ENCODE measurements at regions of chr4 and their contacts with region 1.

Region 1: DNA sequence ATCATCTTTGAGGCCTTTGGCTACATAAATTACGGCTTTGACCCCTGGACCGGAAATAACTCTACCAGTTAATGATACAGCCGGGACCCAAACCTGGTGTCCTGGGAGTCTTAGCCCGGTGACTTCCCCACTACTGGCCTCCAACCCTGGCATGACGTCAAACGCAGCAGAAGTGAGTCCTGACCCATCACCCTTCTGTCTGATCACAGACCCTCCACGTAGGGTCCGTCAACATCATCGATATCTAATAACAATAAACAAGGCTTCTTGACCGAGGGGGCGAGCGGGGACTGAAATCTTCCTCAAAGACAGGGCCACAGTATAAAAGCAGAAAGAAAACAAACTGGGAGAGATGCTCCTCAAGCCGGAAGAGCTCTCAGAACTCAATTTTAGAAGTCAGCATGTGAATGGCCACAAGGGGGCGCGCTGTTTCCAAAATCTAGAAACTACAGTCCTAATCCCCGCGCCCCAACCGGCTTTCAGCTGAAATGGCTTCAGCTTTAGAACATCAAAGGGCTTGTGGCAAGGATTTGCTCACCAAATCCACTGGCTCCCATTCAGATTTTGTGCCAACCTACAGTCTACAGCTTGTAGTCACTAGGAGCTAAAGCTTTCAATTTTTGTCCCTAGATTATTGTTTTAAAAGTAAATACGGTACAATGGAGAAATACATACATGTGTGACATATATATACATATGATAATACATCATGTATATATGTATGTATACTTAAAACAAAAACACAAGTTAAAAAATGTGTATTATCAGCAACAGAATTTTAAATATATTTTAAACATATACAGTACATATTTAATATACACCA is 46.4 kb upstream of the ENPP6 start:
- DNase-seq: peak; percentile 85 to 91 (median 90)
- H3K4me3 ChIP-seq: no peak overlapping the region
- H3K4me3 Mint-ChIP-seq: peak overlapping the region; percentile 14 to 61
- H3K27ac ChIP-seq: peak overlapping the region in 1 of 2 donors; percentile 24
- H3K27ac Mint-ChIP-seq: peak overlapping the region in 4 of 7 donors; percentile 15 to 74 (median 31)
- H3K4me1 ChIP-seq: peaks cover 22 to 38% of the 10 kb centered on the region in 2 donors
- H3K4me1 Mint-ChIP-seq: peaks cover 44% of the 10 kb centered on the region
- H3K27me3 ChIP-seq: no peaks in the 10 kb centered on the region
- H3K27me3 Mint-ChIP-seq: peaks cover 0 to 4% (median 0%) of the 10 kb centered on the region in 3 donors
- CTCF ChIP-seq: peak; percentile 80

Region 2: DNA sequence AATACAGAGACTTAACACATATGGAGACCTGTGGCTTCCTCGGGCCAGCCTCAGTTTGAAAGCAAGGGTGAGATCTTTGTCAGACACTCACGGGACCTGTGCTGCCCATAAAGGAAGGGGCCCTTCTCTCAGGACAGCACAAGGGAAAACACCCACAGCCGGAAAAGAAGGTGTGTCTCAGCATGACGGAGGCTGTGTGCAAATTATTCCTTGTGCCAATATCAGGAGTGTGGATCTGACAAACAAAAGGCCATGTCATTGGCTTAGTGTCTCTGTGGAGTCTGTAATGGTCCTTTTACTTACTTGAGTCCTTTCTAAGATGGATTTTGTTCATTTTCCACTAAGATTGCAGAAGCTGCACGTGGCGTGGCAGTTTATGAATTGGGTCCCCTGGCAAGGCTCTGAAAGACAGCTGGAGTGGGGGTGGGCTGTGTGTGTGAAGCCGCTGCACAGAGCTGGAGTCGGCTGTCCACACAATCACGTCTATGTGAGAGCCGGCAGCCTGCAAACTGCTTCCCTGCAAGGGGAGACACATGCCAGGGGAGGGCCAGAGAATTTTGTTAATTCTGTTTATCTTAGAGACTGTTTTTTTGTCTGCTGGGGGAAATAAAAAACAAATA is 48.3 kb before region 1 on chr4:
- intact Hi-C with region 1: no loop called
- DNase-seq: no peak
- H3K4me3 ChIP-seq: no peak overlapping the region
- H3K4me3 Mint-ChIP-seq: no peak overlapping the region
- H3K27ac ChIP-seq: no peak overlapping the region
- H3K27ac Mint-ChIP-seq: no peak overlapping the region
- H3K4me1 ChIP-seq: no peaks in the 10 kb centered on the region
- H3K4me1 Mint-ChIP-seq: no peaks in the 10 kb centered on the region
- H3K27me3 ChIP-seq: no peaks in the 10 kb centered on the region
- H3K27me3 Mint-ChIP-seq: peaks cover 2 to 4% (median 2%) of the 10 kb centered on the region in 3 donors
- CTCF ChIP-seq: no peak

Region 3: GRCh38 chr4:184310171-184310567 is 46.0 kb after region 1 on chr4:
- intact Hi-C with region 1: loop called in 1 of 2 experiments (anchors 5 kb)
- DNase-seq: peak; percentile 53 to 73 (median 59)
- H3K4me3 ChIP-seq: no peak overlapping the region
- H3K4me3 Mint-ChIP-seq: no peak overlapping the region
- H3K27ac ChIP-seq: peak overlapping the region in 1 of 2 donors; percentile 2
- H3K27ac Mint-ChIP-seq: peak overlapping the region in 1 of 7 donors; percentile 67
- H3K4me1 ChIP-seq: peaks cover 34 to 36% of the 10 kb centered on the region in 2 donors
- H3K4me1 Mint-ChIP-seq: peaks cover 42% of the 10 kb centered on the region
- H3K27me3 ChIP-seq: no peaks in the 10 kb centered on the region
- H3K27me3 Mint-ChIP-seq: peaks cover 0 to 4% (median 0%) of the 10 kb centered on the region in 3 donors
- CTCF ChIP-seq: peak; percentile 61

Region 4: GRCh38 chr4:184384056-184384809 is 120.1 kb after region 1 on chr4:
- intact Hi-C with region 1: loop called in 1 of 2 experiments (anchors 10 kb)
- DNase-seq: peak in 2 of 3 donors; percentile 32 to 54
- H3K4me3 ChIP-seq: peak overlapping the region in 1 of 3 experiments; percentile 58
- H3K4me3 Mint-ChIP-seq: peak overlapping the region in 1 of 2 donors; percentile 68
- H3K27ac ChIP-seq: peak overlapping the region; percentile 28 to 82
- H3K27ac Mint-ChIP-seq: peak overlapping the region; percentile 50 to 85 (median 73)
- H3K4me1 ChIP-seq: peaks cover 58 to 63% of the 10 kb centered on the region in 2 donors
- H3K4me1 Mint-ChIP-seq: peaks cover 60% of the 10 kb centered on the region
- H3K27me3 ChIP-seq: no peaks in the 10 kb centered on the region
- H3K27me3 Mint-ChIP-seq: no peaks in the 10 kb centered on the region
- CTCF ChIP-seq: no peak

Region 5: GRCh38 chr4:184538023-184538599 is 274.0 kb after region 1 on chr4:
- intact Hi-C with region 1: loop called (anchors 1 to 2 kb)
- DNase-seq: peak; percentile 88 to 92 (median 92)
- H3K4me3 ChIP-seq: peak overlapping the region; percentile 79 to 96 (median 79)
- H3K4me3 Mint-ChIP-seq: peak overlapping the region; percentile 89 to 93
- H3K27ac ChIP-seq: peak overlapping the region; percentile 96 to 99
- H3K27ac Mint-ChIP-seq: peak overlapping the region; percentile 99 to 100 (median 100)
- H3K4me1 ChIP-seq: peaks cover 30 to 36% of the 10 kb centered on the region in 2 donors
- H3K4me1 Mint-ChIP-seq: peaks cover 46% of the 10 kb centered on the region
- H3K27me3 ChIP-seq: no peaks in the 10 kb centered on the region
- H3K27me3 Mint-ChIP-seq: peaks cover 0 to 5% (median 3%) of the 10 kb centered on the region in 3 donors
- CTCF ChIP-seq: peak; percentile 77

Region 6: GRCh38 chr4:184649026-184649970 is 385.2 kb after region 1 on chr4 and contains the starts of genes CASP3 and PRIMPOL:
- intact Hi-C with region 1: loop called in 1 of 2 experiments (anchors 10 kb)
- DNase-seq: peak; percentile 91
- H3K4me3 ChIP-seq: peak within 1 kb of the TSS; percentile 89 to 91 (median 89)
- H3K4me3 Mint-ChIP-seq: peak within 1 kb of the TSS; percentile 89 to 94
- H3K27ac ChIP-seq: peak within 1 kb of the TSS; percentile 72 to 88
- H3K27ac Mint-ChIP-seq: peak within 1 kb of the TSS; percentile 89 to 94 (median 91)
- H3K4me1 ChIP-seq: peaks cover 21 to 41% of the 10 kb centered on the region in 2 donors
- H3K4me1 Mint-ChIP-seq: peaks cover 50% of the 10 kb centered on the region
- H3K27me3 ChIP-seq: no peaks in the 10 kb centered on the region
- H3K27me3 Mint-ChIP-seq: peaks cover 0 to 1% (median 0%) of the 10 kb centered on the region in 3 donors
- CTCF ChIP-seq: no peak
- polyA plus RNA-seq, gene CASP3: 6.7 to 11.3 (median 11.1) TPM
- polyA plus RNA-seq, gene PRIMPOL: 7.0 to 10.5 (median 10.0) TPM

Measured in CD14-positive monocyte (primary cell).